ENCODE measurements at regions of chr16 and their contacts with region 1.

Region 1: GRCh38 chr16:62041401-62041800 is 5.2 kb upstream of the CDH8 start:
- DNase-seq: peak in 36 of 42 donors; percentile 19 to 88 (median 68)

Region 2: DNA sequence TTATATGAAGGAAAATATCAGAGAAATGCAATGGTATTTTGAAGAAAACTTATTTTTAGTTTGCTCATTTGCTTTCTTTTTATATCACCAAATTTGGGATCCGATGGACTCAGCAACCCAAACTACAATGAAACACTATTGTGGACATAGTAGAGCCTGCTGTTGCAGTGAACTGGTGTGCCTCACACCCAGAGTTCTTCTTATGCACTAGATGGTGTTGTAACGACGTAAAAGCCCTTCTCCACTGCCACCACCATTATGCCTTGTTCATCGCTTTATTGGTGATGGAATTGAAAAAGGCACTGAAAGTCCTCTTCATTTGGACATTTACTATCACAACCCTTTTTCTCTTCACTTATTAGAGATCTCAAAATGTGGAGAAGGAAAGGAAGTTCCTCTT is 386.4 kb before region 1 on chr16:
- intact Hi-C with region 1: loop called (anchors 10 kb)
- DNase-seq: peak in 30 of 42 donors; percentile 7 to 78 (median 39)

Region 3: DNA sequence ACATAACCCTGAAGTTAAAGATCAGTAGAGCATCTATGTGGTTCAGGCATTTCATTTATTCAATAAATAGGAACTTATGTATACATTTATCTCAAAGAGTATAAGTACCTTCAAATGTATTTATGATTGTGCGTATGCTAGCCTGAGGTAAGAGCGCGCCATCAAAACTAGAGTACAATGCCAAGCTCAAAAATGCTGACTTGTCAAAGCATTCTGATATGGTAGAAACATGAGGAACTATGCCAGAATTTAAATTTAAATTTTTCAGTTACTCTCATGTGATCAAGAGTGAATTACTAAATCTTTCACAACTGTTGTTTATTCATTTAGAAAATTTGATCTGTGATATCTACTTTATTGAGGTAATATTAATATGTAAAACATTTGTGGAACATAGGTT is 220.4 kb after region 1 on chr16:
- intact Hi-C with region 1: no loop called
- DNase-seq: no peak

Region 4: DNA sequence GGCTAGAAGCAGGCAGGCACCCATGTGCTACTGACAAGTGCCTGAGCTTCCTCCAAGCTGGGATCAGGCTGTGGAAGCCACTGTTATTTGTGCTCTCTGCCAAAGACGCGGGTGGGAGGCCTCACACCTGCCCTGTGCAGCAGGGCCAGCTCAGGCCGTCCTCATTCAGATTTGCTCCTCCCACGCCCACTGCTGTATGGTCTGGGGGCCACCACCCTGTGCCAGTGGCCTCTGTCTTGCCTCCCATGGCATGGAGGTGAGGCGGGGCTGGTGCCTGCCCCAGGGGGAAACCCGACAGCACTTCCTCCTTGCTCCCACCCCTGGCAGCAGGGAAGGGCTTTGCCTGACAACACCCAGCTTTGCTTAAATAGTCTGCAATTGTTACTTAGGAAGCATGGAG is 351.3 kb after region 1 on chr16:
- intact Hi-C with region 1: no loop called
- DNase-seq: no peak

Measured in head of caudate nucleus (tissue), 42 donors.